ENCODE measurements at regions of chr10 and their contacts with region 1.

Region 1: DNA sequence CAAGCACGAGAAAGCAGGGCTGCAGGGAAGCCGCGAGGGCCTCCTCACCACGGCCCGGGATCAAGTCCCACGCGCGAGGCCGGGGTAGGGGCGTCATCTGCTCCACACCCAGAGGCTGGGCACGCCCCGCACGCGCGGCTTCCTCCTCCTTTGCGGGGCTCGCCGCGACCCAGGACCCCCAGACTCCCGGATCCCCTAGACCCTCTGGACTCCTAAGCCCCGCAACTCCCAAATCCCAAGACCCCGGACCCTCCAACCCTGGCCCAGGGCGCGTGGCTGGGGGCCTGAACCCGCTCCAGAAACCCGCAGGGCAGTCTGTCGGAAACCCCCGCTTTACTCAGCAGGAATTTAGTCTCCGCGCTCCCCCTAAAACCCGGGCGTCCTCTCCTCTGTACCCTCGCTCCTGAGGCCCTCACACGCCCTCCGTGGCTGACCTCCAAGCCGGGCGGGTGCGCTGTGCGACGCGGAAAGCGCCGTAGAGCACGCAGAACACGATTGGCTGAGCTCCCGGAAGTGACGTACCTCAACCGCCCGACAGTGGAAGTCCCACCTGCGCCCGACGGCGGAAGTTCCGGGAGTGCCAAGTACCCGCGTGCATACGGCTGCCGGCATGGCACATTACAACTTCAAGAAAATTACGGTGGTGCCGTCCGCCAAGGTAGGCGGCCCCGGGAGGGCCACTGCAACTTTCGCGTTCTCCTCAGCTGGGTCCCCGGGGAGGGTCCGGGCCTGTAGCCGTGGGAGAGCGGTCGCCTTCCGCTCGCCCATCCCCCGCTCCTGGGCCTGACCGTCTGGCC is at the start of gene GTPBP4:
- DNase-seq: peak; percentile 99
- H3K4me3 ChIP-seq: peak within 1 kb of the TSS; percentile 61 to 95 (median 86)
- H3K27ac ChIP-seq: peak within 1 kb of the TSS; percentile 91 to 97 (median 94)
- H3K4me1 ChIP-seq: peaks cover 11 to 21% (median 14%) of the 10 kb centered on the region in 4 donors
- H3K27me3 ChIP-seq: no peaks in the 10 kb centered on the region
- CTCF ChIP-seq: no peak
- EP300 ChIP-seq: no peak
- POLR2A ChIP-seq: peak; percentile 91
- total RNA-seq, gene GTPBP4: 9.4 to 25.4 (median 17.1) TPM

Region 2: DNA sequence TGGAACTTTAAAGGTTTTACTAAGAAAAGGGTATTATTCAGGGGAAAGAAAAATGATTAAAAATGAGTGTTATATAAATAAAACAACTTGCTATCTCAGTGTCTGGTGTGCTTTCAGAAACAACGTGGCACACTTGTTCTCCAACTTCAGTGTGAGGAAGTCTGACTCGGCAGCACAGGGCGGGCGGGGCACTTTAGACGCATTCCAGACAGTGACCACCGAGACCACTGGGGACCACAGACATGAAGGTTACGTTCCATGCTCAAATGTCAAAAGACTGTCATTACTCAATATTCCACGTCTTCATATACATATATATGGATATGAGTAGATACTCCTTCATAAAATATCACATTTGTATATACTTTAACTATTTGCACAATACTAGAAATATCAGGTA is 143.5 kb before region 1 on chr10:
- in situ Hi-C with region 1: loop called in 1 of 4 experiments (anchors 25 kb)
- intact Hi-C with region 1: no loop called
- DNase-seq: no peak
- H3K4me3 ChIP-seq: no peak overlapping the region
- H3K27ac ChIP-seq: no peak overlapping the region
- H3K4me1 ChIP-seq: peaks cover 0 to 5% (median 0%) of the 10 kb centered on the region in 4 donors
- H3K27me3 ChIP-seq: no peaks in the 10 kb centered on the region
- CTCF ChIP-seq: no peak
- EP300 ChIP-seq: no peak
- POLR2A ChIP-seq: no peak

Region 3: DNA sequence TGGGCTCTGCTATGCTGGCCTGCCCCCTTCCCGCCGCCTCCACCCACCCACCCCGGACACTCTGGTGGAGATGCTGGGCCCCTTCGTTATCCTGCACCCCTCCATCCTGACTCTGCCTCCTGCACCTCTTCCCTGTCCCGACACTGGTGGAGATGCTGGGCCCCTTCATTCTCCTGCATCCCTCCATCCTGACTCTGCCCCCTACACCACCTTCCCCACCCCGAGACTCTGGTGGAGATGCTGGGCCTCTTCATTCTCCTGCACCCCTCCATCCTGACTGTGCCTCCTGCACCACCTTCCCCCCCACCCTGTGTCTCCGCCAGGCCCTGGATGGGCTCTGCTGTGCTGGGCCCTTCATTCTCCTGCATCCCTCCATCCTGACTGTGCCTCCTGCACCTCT is 22.6 kb after region 1 on chr10:
- in situ Hi-C with region 1: no loop called
- intact Hi-C with region 1: no loop called
- DNase-seq: no peak
- H3K4me3 ChIP-seq: no peak overlapping the region
- H3K27ac ChIP-seq: no peak overlapping the region
- H3K4me1 ChIP-seq: no peaks in the 10 kb centered on the region
- H3K27me3 ChIP-seq: no peaks in the 10 kb centered on the region
- CTCF ChIP-seq: no peak
- EP300 ChIP-seq: no peak
- POLR2A ChIP-seq: no peak

Region 4: DNA sequence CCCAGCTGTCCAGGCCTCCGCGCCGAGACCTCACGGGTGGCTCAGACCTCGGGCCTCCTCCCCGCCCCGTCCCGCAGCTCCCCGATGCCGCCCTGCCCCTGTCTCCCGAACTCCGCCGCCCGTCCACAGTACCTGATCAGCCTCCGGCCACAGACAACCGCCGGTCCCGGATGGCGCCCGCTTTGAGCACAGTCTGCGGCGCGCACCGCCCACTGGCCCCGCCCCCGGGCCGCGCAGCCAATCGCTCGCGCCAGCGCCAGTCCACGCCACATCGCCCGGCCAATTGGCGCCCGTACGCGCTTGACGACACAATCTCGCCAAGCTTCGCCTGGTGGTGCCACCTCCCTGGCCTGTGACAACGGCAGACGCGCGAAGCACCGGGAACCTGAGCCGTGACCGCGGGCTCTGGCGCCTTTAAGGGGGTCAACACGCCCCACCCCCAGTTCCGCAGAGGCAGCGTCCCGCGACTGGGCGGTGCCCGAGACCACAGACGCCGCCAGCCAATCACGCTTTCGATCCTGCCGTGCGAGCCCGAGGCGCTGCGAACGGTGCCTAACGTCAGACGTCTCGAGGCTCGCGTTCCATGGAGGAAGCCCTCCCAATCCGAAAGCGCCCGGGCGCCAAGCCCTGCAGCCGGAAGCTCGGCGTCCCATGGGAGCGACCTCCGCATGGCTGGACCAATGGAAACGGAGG is 60.8 kb after region 1 on chr10 and contains the start of gene IDI1:
- in situ Hi-C with region 1: loop called in 1 of 4 experiments (anchors 10 kb)
- intact Hi-C with region 1: no loop called
- DNase-seq: peak; percentile 97
- H3K4me3 ChIP-seq: peak within 1 kb of the TSS; percentile 57 to 82 (median 73)
- H3K27ac ChIP-seq: peak within 1 kb of the TSS; percentile 98 to 100 (median 99)
- H3K4me1 ChIP-seq: peaks cover 11 to 41% (median 23%) of the 10 kb centered on the region in 4 donors
- H3K27me3 ChIP-seq: no peaks in the 10 kb centered on the region
- CTCF ChIP-seq: peak in 1 of 5 experiments; percentile 25
- EP300 ChIP-seq: no peak
- POLR2A ChIP-seq: peak; percentile 97
- total RNA-seq, gene IDI1: 31.1 to 81.5 (median 57.1) TPM